HCT116 (cell line): ENCODE measurements at regions of chr10 and their contacts with region 1.

Region 1: DNA sequence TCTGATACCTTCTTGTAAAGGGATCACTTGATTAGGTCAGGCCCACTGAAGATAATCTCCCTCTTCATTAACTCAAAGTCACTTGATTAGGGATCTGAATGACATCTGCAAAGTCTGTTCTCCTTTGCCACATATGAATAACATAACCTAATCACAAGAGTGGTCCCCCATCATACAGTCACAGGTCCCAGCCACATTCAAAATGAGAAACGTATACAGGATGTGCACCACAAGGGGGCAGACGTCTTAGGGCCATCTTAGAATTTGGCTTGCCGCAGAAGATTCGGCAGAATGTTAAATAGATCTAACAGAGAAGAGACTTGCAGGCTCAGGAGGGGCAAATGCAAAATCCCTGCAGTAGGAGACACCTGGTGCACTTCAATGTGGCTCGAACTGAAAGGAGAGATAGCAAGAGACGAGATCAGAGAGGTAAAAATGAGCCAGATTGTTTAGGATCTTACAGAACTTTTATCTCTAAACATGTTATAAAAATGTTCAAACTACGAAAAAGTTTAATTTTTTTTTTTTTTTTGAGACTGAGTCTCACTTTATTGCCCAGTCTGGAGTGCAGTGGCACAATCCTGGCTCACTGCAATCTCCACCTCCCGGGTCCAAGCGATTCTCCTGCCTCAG is 10.4 kb upstream of the SMC3 start:
- DNase-seq: peak; percentile 73
- ATAC-seq: peak; percentile 91
- H3K4me3 ChIP-seq: no peak overlapping the region
- H3K27ac ChIP-seq: no peak overlapping the region
- H3K4me1 ChIP-seq: peaks cover 0 to 3% of the 10 kb centered on the region in 2 experiments; a peak in 1 of 4 replicates
- H3K27me3 ChIP-seq: no peaks in the 10 kb centered on the region
- CTCF ChIP-seq: peak; percentile 75 to 97 (median 84); a peak in 5 of 6 replicates
- POLR2A ChIP-seq: no peak
- RAD21 ChIP-seq: peak; percentile 64

Region 2: GRCh38 chr10:110600487-110601101 is 43.5 kb after region 1 on chr10:
- CTCF ChIA-PET with region 1: no interaction called
- POLR2A ChIA-PET with region 1: no interaction called
- RAD21 ChIA-PET with region 1: no interaction called
- intact Hi-C with region 1: loop called (anchors 2 kb)
- DNase-seq: peak; percentile 87
- ATAC-seq: peak; percentile 98
- H3K4me3 ChIP-seq: no peak overlapping the region
- H3K27ac ChIP-seq: no peak overlapping the region
- H3K4me1 ChIP-seq: no peaks in the 10 kb centered on the region
- H3K27me3 ChIP-seq: no peaks in the 10 kb centered on the region
- CTCF ChIP-seq: peak; percentile 73 to 86 (median 85)
- POLR2A ChIP-seq: no peak
- RAD21 ChIP-seq: peak; percentile 74

Region 3: DNA sequence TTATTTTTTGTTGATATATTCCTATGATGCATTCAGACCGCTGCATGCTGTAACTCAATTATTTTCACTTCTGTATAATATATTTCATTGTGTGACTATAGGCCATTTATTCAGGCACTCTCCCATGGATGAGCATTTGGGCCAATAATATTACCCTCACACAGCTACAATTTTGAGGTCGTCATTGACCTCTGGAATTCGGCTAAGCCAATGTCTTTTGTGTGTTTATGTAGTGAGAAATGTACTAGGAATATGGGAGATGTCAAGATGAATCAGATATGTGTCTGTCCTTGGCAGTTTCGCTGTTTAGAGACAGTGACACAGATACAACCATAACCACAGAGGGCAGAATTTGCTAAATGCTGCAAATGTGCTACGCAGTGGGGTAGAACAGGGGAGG is 993.9 kb after region 1 on chr10:
- CTCF ChIA-PET with region 1: no interaction called
- POLR2A ChIA-PET with region 1: no interaction called
- RAD21 ChIA-PET with region 1: no interaction called
- intact Hi-C with region 1: no loop called
- DNase-seq: no peak
- ATAC-seq: no peak
- H3K4me3 ChIP-seq: no peak overlapping the region
- H3K27ac ChIP-seq: no peak overlapping the region
- H3K4me1 ChIP-seq: no peaks in the 10 kb centered on the region
- H3K27me3 ChIP-seq: no peaks in the 10 kb centered on the region
- CTCF ChIP-seq: no peak
- POLR2A ChIP-seq: no peak
- RAD21 ChIP-seq: no peak